Sigmoid colon (tissue), 7 donors: ENCODE measurements at regions of chr10 and their contacts with region 1.

Region 1: DNA sequence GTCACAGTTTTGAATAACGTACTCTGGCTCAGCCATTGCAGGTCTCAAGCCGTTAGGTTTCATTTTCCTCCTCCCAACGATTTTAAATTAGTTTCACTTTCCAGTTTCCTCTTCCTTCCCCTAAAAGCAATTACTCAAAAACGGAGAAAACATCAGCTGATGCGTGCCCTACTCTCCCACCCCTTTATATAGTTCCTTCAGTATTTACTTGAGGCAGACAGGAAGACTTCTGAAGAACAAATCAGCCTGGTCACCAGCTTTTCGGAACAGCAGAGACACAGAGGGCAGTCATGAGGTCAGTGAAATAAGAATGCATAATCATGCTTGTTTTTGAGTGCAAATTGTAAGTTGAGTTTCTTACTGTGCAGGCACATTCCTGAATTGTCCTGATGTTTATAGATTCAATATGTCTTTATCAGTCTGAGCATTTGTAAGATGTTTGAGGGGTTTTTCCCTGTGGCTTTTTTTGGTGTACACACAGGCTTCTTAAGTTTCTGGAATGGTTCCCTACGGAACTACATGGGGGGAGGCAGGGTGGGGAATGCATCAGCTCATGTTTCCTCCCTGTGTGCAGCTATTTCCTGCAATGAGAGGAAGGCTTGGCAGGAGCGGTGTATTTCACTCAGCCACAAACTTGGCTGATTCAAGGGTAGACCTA is at the start of gene IFIT3:
- DNase-seq: peak; percentile 85
- H3K4me3 ChIP-seq: peak within 1 kb of the TSS; percentile 23 to 53 (median 45)
- H3K27ac ChIP-seq: peak within 1 kb of the TSS; percentile 75 to 85 (median 79)
- H3K4me1 ChIP-seq: peaks cover 0 to 42% (median 21%) of the 10 kb centered on the region in 4 donors
- H3K27me3 ChIP-seq: no peaks in the 10 kb centered on the region
- CTCF ChIP-seq: no peak
- EP300 ChIP-seq: no peak
- POLR2A ChIP-seq: peak in 1 of 2 donors; percentile 10
- total RNA-seq, gene IFIT3: 8.0 to 20.7 (median 10.5) TPM

Region 2: DNA sequence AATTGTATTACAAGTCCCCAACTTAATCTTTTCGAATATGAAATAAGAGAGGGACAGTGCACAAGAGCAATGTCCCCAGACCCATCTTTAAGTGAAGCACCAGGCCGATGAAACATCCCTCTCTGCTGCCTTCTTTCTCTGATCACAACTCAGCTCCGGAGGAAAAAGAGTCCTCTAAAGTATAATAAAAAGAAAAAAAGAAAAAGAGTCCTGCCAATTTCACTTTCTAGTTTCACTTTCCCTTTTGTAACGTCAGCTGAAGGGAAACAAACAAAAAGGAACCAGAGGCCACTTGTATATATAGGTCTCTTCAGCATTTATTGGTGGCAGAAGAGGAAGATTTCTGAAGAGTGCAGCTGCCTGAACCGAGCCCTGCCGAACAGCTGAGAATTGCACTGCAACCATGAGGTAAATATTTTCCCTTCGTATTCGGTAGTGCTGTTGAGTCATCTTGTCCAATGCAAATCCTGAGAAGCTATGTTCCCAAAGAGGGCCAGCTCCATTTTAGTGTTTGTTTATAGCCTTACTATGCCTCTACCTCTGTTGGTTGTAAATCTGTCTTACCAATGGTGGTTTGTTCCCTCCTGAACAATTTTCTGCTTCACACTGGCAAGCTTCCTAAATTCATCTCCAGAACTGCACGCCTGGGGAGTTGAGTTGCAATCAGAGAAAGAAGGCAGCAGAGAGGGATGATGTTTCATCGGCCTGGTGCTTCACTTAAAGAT is 26.0 kb before region 1 on chr10 and contains the start of gene IFIT2:
- intact Hi-C with region 1: loop called (anchors 2 kb)
- DNase-seq: no peak
- H3K4me3 ChIP-seq: peak within 1 kb of the TSS; percentile 39 to 51 (median 48)
- H3K27ac ChIP-seq: peak within 1 kb of the TSS; percentile 84 to 92 (median 87)
- H3K4me1 ChIP-seq: peaks cover 0 to 38% (median 34%) of the 10 kb centered on the region in 4 donors
- H3K27me3 ChIP-seq: no peaks in the 10 kb centered on the region
- CTCF ChIP-seq: no peak
- EP300 ChIP-seq: peak in 3 of 4 donors; percentile 24 to 61 (median 38)
- POLR2A ChIP-seq: no peak
- total RNA-seq, gene IFIT2: 2.0 to 6.8 (median 3.2) TPM